ENCODE measurements at regions of chr11 and their contacts with region 1.

Region 1: GRCh38 chr11:66408488-66409214 is 12.2 kb upstream of the NPAS4 start:
- DNase-seq: peak; percentile 86
- H3K4me3 Mint-ChIP-seq: peak overlapping the region; percentile 84
- H3K27ac Mint-ChIP-seq: peak overlapping the region; percentile 72
- H3K4me1 Mint-ChIP-seq: peaks cover 9% of the 10 kb centered on the region
- H3K27me3 Mint-ChIP-seq: peaks cover 21% of the 10 kb centered on the region

Region 2: DNA sequence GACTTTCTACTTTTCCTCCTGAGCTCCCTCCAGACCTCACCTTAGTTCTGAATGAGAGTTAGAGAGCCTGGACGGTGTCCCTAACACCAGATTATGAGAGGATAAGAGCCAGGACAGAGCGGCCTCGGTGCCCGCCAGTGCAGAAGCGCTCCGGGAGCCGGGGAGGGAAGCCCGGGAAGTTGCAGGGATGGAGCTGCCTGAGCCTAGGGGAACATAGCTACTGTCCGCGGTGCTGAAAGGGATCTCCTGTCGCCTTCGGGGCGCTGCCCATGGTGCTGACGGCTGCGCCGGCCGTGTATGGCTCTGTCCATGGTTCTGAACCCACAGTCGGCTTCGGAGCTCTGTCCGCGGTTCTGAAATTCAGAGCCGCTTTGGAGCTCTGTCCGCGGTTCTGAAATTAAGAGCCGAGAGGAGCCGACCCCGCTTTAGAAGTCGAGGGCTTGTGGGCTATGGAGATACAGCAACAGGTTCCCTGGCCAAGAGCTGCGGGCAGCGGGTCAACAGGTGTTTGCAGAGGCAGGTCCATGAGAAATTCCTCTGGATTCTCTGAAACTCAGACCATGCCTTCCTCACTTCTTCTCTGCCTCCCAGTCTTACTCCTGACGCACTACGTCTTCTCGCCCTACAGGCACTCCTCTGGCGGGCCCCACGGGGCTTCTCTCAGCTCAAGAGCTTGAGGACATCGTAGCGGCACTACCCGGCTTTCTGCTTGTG is 13.0 kb after region 1 on chr11:
- intact Hi-C with region 1: loop called (anchors 1 kb)
- DNase-seq: peak; percentile 83
- H3K4me3 Mint-ChIP-seq: no peak overlapping the region
- H3K27ac Mint-ChIP-seq: peak overlapping the region; percentile 53
- H3K4me1 Mint-ChIP-seq: peaks cover 28% of the 10 kb centered on the region
- H3K27me3 Mint-ChIP-seq: peaks cover 21% of the 10 kb centered on the region

Region 3: DNA sequence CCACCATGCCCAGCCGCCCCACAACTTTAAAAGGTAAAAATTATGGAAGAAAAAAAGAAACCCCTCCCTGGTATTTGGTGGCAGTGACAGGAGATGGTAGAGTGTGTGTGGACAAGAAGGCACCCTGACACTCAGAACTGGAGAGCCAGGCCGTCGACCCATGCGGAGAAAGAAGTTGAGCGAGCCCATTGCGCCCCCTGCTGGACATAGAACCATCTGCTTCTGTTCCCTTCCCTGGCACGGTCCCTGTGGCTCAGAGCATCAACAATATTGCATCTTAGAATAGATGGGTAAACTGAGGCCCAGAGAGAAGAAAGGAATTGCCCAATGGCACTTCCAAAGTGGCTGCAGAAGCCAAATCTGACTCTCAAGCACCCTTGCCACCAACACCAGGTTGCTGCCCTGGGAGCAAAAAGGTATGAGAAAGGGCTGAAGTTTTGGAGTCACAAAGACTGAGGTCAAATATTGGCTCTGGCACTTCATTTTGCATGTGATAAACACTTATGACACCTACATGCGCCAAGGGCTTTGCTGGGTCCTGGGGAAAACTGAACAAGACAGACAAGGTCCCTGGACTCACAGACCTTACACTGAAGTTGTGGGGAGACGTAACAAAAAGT is 21.4 kb after region 1 on chr11:
- intact Hi-C with region 1: loop called (anchors 1 kb)
- DNase-seq: peak; percentile 49
- H3K4me3 Mint-ChIP-seq: no peak overlapping the region
- H3K27ac Mint-ChIP-seq: no peak overlapping the region
- H3K4me1 Mint-ChIP-seq: peaks cover 7% of the 10 kb centered on the region
- H3K27me3 Mint-ChIP-seq: no peaks in the 10 kb centered on the region

Region 4: GRCh38 chr11:66438504-66439466 is 30.1 kb after region 1 on chr11 and contains the start of gene MRPL11:
- intact Hi-C with region 1: loop called (anchors 1 kb)
- DNase-seq: peak; percentile 83
- H3K4me3 Mint-ChIP-seq: peak within 1 kb of the TSS; percentile 87
- H3K27ac Mint-ChIP-seq: peak within 1 kb of the TSS; percentile 95
- H3K4me1 Mint-ChIP-seq: peaks cover 17% of the 10 kb centered on the region
- H3K27me3 Mint-ChIP-seq: no peaks in the 10 kb centered on the region
- total RNA-seq, gene MRPL11: 93.0 and 93.6 TPM in 2 replicates

Region 5: DNA sequence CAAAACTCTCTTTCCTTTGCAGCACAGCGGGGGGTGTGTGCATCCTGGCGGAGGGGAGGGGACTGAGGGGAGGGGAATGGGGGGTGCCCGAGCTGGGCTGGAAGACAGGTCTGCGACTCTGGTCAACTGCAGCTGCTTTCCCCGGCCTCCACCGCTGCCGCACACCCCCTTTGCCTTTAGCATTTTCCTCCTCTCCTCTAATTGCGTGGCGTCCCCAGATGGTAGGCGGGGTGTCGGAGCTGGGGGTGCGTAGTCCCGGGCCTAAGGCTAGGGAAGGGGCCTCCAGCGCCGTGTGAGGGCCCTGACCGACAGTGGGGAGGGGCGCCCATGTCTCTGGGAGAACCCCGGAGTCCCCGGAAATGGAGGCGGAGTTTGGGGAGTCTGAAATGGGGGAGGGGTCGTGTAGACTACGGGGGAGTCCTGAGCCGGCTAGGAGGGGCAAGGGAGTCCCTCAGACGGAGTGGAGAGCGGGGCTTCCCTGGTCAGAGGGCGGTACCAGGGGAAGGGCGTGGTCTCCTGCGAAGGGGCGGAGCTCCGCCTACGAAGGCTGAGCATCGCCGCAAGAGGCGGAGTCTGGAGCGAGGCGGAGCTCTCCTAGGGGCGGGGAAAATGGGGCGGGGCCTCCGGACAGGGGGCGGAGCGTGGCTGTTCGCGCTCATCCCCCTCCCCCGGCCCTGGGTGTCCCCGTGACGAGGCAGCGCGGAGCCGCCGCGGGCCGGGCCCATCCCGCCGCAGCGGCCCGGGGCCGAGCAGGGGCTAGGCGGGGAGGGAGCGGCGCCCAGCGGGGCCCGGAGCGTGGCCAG is 57.8 kb after region 1 on chr11 and contains the start of gene PELI3:
- intact Hi-C with region 1: loop called (anchors 1 kb)
- DNase-seq: peak; percentile 86
- H3K4me3 Mint-ChIP-seq: peak within 1 kb of the TSS; percentile 94
- H3K27ac Mint-ChIP-seq: peak within 1 kb of the TSS; percentile 88
- H3K4me1 Mint-ChIP-seq: peaks cover 28% of the 10 kb centered on the region
- H3K27me3 Mint-ChIP-seq: no peaks in the 10 kb centered on the region
- total RNA-seq, gene PELI3: 15.3 and 15.8 TPM in 2 replicates

Region 6: DNA sequence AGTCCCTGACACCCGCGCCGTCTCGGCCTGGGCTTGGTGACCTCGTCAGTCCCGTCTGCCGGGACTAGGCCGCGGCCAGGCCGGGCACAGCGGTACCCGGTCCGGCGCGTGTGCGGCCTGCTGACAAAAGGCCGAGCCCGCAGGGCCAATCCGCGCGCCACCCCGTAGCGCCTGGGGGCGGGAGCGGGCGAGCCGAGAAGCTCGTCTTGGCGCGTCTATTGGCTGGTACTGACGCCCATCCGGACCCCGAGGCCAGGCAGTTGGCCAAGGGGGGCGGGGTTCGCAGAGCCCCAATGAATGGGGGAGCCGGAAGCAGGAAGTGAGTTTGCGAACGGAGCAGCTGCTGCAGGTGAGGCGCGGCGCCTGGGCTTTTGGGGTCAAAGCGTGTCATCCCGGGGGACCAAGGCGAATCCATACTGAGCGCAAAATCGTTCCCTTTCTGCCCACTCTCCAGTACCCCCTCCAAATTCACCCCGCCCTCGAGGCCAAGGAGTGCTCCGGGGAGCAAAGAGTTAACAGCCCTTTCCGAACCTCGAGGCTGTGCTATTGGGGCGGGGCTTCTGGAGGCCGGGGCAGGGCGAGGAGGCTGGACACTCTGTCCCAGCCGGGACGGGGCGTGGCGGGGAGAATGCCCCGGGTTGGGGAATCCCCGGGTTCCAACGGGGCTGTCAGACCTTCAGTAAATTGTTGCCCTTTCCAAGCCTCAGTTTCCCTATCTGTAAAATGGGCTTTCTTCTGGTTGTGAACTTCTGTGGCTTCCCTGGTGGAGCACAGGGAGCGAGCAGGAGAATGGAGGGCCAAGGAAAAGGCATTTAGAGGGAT is 71.7 kb after region 1 on chr11 and contains the start of gene DPP3:
- intact Hi-C with region 1: loop called (anchors 1 kb)
- DNase-seq: peak; percentile 96
- H3K4me3 Mint-ChIP-seq: peak within 1 kb of the TSS; percentile 89
- H3K27ac Mint-ChIP-seq: peak within 1 kb of the TSS; percentile 82
- H3K4me1 Mint-ChIP-seq: peaks cover 44% of the 10 kb centered on the region
- H3K27me3 Mint-ChIP-seq: no peaks in the 10 kb centered on the region
- total RNA-seq, gene DPP3: 102 and 112 TPM in 2 replicates

Region 7: GRCh38 chr11:66835768-66836405 is 427.2 kb after region 1 on chr11:
- intact Hi-C with region 1: loop called (anchors 1 kb)
- DNase-seq: no peak
- H3K4me3 Mint-ChIP-seq: no peak overlapping the region
- H3K27ac Mint-ChIP-seq: no peak overlapping the region
- H3K4me1 Mint-ChIP-seq: peaks cover 22% of the 10 kb centered on the region
- H3K27me3 Mint-ChIP-seq: no peaks in the 10 kb centered on the region

Measured in activated T-helper 1 cell treated with anti-CD3 and anti-CD28 coated beads, Interleukin-12 subunit alpha, Interleukin-12 subunit beta, Interleukin-2, Interleukin-4 antibody, amounts not matched to agents 30 ng/mL and 10 ng/mL and 1 ng/mL, durations not matched to agents 14 hours and 24 hours and 36 hours (primary cell).